GM12878 (cell line): ENCODE measurements at regions of chr6 and their contacts with region 1.

Region 1: DNA sequence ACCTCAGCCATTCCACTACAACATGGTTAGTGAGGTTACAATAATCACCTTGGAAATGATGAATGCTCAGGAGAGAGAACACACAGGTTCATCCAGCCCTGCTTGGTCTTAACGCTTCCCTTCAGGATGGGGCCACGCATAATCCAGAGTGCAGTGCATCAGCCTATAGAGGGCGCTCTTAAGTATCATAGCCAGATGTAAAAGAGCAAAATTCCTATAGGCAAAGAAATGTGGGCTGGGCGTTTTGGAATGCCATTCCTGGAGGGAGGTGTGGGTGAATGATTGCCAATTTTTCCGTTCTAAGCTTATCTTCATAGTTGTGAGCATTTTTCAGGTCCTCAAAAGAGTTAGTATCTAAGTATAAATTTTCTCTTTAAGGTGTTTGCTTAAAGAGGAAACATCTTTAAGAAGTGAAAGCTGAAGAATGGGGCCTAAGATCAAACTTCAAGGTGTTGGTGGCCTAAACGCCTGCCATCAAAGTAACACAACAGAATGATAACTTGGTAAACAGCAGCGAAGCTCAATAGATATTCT is 1.8 kb downstream of the RIPOR2 start:
- DNase-seq: no peak
- ATAC-seq: peak; percentile 14; the same call in 1 of the 3 replicates
- H3K4me3 ChIP-seq: peak overlapping the region; percentile 74
- H3K27ac ChIP-seq: peak overlapping the region; percentile 75
- H3K4me1 ChIP-seq: peaks cover 55% of the 10 kb centered on the region
- H3K27me3 ChIP-seq: no peaks in the 10 kb centered on the region
- CTCF ChIP-seq: peak; percentile 78 to 95 (median 83)
- EP300 ChIP-seq: no peak
- POLR2A ChIP-seq: no peak
- RAD21 ChIP-seq: peak; percentile 57; the same call in 1 of the 2 replicates

Region 2: GRCh38 chr6:24720604-24721460 is 213.1 kb before region 1 on chr6:
- CTCF ChIA-PET with region 1: interaction called, 4 read pairs
- POLR2A ChIA-PET with region 1: no interaction called
- RAD21 ChIA-PET with region 1: no interaction called
- SMC1A ChIA-PET with region 1: no interaction called
- in situ Hi-C with region 1: no loop called
- intact Hi-C with region 1: loop called (anchors 5 kb)
- DNase-seq: peak; percentile 98
- ATAC-seq: peak; percentile 89
- H3K4me3 ChIP-seq: peak overlapping the region; percentile 86
- H3K27ac ChIP-seq: peak overlapping the region; percentile 95
- H3K4me1 ChIP-seq: no peaks in the 10 kb centered on the region; the same call in 1 of the 2 replicates
- H3K27me3 ChIP-seq: no peaks in the 10 kb centered on the region
- CTCF ChIP-seq: no peak
- EP300 ChIP-seq: no peak
- POLR2A ChIP-seq: peak; percentile 73
- RAD21 ChIP-seq: no peak

Region 3: DNA sequence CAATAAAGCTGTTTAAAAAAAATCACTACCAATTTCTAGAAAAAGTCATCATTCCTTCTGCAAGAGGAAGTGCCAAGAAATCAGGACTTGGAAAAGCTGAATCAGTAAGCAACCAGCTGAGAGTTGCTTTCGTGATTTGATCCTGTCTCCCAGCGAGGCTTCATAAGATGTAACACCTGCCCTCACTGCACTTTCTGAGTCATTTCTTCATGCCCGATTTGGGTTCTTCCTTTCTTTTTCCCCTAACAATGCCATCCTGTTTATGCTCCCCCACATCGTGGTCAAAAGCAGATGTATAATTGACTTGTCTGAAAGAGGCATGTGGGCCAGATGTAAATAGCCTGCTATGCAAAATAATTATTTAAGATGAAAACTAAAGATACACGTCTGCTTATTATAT is 50.3 kb before region 1 on chr6:
- CTCF ChIA-PET with region 1: interaction called, 84 read pairs
- POLR2A ChIA-PET with region 1: no interaction called
- RAD21 ChIA-PET with region 1: interaction called, 10 read pairs
- SMC1A ChIA-PET with region 1: interaction called, 47 read pairs
- in situ Hi-C with region 1: no loop called
- intact Hi-C with region 1: loop called (anchors 2 kb)
- DNase-seq: peak; percentile 84
- ATAC-seq: peak; percentile 90
- H3K4me3 ChIP-seq: no peak overlapping the region
- H3K27ac ChIP-seq: peak overlapping the region; percentile 60; the same call in 1 of the 2 replicates
- H3K4me1 ChIP-seq: peaks cover 33% of the 10 kb centered on the region
- H3K27me3 ChIP-seq: no peaks in the 10 kb centered on the region
- CTCF ChIP-seq: no peak
- EP300 ChIP-seq: peak; percentile 54 to 74; a peak in 3 of 4 replicates
- POLR2A ChIP-seq: no peak
- RAD21 ChIP-seq: no peak

Region 4: GRCh38 chr6:24919004-24919892 is 14.7 kb before region 1 on chr6:
- CTCF ChIA-PET with region 1: interaction called, 139 read pairs
- POLR2A ChIA-PET with region 1: interaction called, 7 read pairs
- RAD21 ChIA-PET with region 1: interaction called, 8 read pairs
- SMC1A ChIA-PET with region 1: interaction called, 201 read pairs
- in situ Hi-C with region 1: no loop called
- intact Hi-C with region 1: no loop called
- DNase-seq: no peak
- ATAC-seq: peak; percentile 75
- H3K4me3 ChIP-seq: peak overlapping the region; percentile 13; the same call in 1 of the 2 replicates
- H3K27ac ChIP-seq: peak overlapping the region; percentile 1
- H3K4me1 ChIP-seq: peaks cover 28% of the 10 kb centered on the region
- H3K27me3 ChIP-seq: no peaks in the 10 kb centered on the region
- CTCF ChIP-seq: no peak
- EP300 ChIP-seq: no peak
- POLR2A ChIP-seq: no peak
- RAD21 ChIP-seq: no peak

Region 5: DNA sequence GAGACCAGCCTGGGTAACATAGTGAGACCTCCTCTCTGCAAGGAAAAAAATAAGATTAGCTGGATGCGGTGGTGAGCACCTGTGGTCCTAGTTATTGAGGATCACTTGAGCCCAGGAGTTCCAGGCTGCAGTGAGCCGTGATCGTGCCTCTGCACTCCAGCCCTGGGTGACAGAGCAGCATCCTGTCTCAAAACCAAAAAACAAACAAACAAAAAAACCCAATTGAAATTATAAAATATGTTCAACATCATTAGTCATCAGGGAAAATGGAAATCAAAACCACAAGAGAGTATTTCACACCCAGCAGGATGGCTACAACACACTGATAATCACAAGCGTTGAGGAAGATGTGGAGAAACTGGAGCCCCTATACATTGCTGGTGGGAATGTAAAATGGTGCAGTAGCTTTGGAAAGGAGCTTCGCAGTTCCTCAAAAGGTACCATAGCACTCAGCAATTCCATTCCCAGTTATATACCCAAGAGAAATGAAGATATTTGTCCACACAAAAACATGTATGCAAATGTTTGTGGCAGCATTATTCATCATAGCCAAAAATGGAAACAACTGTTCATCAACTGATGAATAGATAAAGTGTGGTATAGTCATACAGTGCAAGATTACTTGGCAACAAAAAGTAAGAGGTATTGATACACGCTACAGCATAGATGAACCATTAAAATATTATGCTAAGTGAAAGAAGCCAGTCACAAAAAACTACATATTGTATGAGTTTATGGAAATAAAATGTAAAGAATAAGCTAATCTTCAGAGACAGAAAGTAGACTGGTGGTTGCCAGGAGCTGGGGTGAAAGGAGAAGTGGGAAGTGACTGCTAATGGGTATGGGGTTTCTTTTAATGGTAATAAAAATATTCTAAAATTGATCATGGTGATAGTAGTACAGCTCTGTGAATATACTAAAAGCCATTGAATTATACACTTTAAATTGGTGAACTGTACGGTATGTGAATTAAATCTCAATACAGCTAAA is 40.5 kb after region 1 on chr6:
- CTCF ChIA-PET with region 1: interaction called, 25 read pairs
- POLR2A ChIA-PET with region 1: no interaction called
- RAD21 ChIA-PET with region 1: interaction called, 12 read pairs
- SMC1A ChIA-PET with region 1: interaction called, 54 read pairs
- in situ Hi-C with region 1: no loop called
- intact Hi-C with region 1: no loop called
- DNase-seq: no peak
- ATAC-seq: peak; percentile 95
- H3K4me3 ChIP-seq: no peak overlapping the region
- H3K27ac ChIP-seq: no peak overlapping the region
- H3K4me1 ChIP-seq: peaks cover 10% of the 10 kb centered on the region
- H3K27me3 ChIP-seq: no peaks in the 10 kb centered on the region
- CTCF ChIP-seq: no peak
- EP300 ChIP-seq: no peak; a peak in 1 of 4 replicates
- POLR2A ChIP-seq: no peak
- RAD21 ChIP-seq: no peak

Region 6: GRCh38 chr6:25027221-25027916 is 93.4 kb after region 1 on chr6:
- CTCF ChIA-PET with region 1: interaction called, 50 read pairs
- POLR2A ChIA-PET with region 1: interaction called, 5 read pairs
- RAD21 ChIA-PET with region 1: interaction called, 40 read pairs
- SMC1A ChIA-PET with region 1: interaction called, 11 read pairs
- in situ Hi-C with region 1: no loop called
- intact Hi-C with region 1: no loop called
- DNase-seq: peak; percentile 60
- ATAC-seq: peak; percentile 98
- H3K4me3 ChIP-seq: 0 out of 2 replicates have a peak overlapping the region, but pooled peaks have one; percentile 34
- H3K27ac ChIP-seq: no peak overlapping the region
- H3K4me1 ChIP-seq: peaks cover 7% of the 10 kb centered on the region
- H3K27me3 ChIP-seq: no peaks in the 10 kb centered on the region
- CTCF ChIP-seq: peak; percentile 71 to 82 (median 71)
- EP300 ChIP-seq: no peak
- POLR2A ChIP-seq: no peak
- RAD21 ChIP-seq: peak; percentile 86

Region 7: DNA sequence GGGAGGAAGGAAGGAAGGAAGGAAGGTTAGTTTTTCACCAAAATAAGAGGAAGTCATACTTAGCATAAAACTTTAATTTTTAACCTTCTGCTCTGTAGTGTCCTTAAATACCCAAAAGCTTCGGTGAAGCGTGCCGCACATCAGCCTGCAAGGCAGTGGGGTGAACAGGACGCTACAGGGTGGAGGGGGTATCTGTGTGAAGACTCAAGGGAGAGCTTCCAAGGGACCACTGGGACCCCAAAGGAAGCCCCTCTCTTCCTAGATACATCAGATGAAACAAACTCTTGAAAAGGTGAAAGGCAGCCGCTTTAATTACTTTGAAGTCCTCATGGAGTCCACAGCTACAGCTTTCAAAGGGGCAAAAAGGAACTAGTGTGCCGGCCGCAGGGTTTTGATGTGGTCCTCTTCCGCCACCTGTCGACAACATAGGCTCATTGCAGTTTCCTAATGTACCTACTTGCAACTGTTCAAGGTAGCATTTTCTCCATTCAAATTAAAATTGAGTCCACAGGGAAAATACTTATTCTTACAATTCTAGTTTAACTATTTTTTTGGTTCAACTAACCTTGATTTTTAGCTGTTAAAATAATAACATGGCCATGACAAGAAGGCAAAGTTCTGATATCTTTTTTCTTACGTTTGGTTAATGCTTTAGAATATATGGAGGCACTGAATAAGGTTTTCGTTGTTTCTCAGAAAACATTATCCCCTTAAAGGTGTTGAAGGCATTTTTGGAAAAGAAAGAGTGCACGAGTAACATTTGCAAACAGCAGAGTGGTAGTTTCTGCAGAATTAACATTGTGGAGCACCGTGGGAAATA is 136.8 kb after region 1 on chr6:
- CTCF ChIA-PET with region 1: interaction called, 31 read pairs
- POLR2A ChIA-PET with region 1: no interaction called
- RAD21 ChIA-PET with region 1: interaction called, 18 read pairs
- SMC1A ChIA-PET with region 1: interaction called, 5 read pairs
- in situ Hi-C with region 1: no loop called
- intact Hi-C with region 1: loop called (anchors 1 kb)
- DNase-seq: peak; percentile 65
- ATAC-seq: peak; percentile 96
- H3K4me3 ChIP-seq: peak overlapping the region; percentile 70
- H3K27ac ChIP-seq: no peak overlapping the region
- H3K4me1 ChIP-seq: no peaks in the 10 kb centered on the region
- H3K27me3 ChIP-seq: no peaks in the 10 kb centered on the region
- CTCF ChIP-seq: peak; percentile 85 to 90 (median 88)
- EP300 ChIP-seq: no peak
- POLR2A ChIP-seq: no peak
- RAD21 ChIP-seq: peak; percentile 97